AG04449 (cell line): ENCODE measurements at regions of chr5 and their contacts with region 1.

Region 1: DNA sequence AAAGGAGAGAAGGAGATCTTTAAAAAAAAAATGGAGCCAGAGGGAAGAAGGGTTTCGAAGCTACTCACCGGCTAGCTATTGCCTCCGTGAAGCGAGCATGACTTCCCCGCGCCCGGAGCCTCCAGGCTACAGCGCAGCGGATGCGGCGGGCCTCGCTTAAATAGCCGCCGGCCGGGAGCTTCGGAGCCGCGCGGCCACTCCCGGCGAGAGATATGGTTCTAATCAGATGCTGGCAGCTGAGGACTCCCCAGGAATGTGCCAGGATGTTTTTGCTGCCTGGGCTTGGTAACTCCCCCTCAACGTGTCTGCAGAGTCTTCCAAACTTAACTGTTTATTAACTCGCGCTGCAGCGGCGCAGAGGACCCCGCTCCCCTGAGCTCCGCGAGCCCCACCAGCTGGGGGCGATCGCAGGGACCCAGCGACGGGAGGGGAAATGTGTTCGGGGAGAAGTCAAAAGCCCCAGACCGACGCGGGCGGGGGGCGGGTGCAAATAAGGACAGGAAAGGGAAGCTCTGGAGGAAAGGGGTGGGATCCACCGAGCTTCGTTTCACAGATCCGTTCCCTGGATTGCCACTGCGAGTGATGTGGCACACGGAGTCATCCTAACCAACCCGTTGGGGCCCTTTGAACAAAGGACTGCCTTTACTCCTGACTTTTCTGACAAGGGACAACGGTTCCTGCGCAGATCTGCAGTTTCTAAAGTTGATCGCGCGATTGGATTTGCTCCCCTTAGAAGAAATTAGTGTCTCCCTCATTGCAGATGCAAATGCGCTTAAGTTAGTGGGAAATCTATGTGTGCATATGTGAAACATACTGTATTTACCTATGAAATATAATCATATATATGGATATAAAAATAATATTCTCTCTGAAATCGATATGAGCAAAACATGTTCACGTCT is at the start of gene DAB2:
- DNase-seq: peak; percentile 91
- H3K4me3 ChIP-seq: peak within 1 kb of the TSS; percentile 83
- CTCF ChIP-seq: peak; percentile 87

Region 2: GRCh38 chr5:38938424-38938823 is 486.6 kb before region 1 on chr5:
- CTCF ChIA-PET with region 1: no interaction called
- POLR2A ChIA-PET with region 1: no interaction called
- DNase-seq: no peak
- H3K4me3 ChIP-seq: no peak overlapping the region
- CTCF ChIP-seq: no peak

Region 3: GRCh38 chr5:39399135-39400036 is 25.6 kb before region 1 on chr5:
- CTCF ChIA-PET with region 1: interaction called, 9 read pairs
- POLR2A ChIA-PET with region 1: interaction called, 35 read pairs
- DNase-seq: peak; percentile 94
- H3K4me3 ChIP-seq: no peak overlapping the region
- CTCF ChIP-seq: no peak

Region 4: GRCh38 chr5:39411051-39411450 is 13.9 kb before region 1 on chr5:
- CTCF ChIA-PET with region 1: interaction called, 23 read pairs
- POLR2A ChIA-PET with region 1: interaction called, 32 read pairs
- DNase-seq: no peak
- H3K4me3 ChIP-seq: no peak overlapping the region
- CTCF ChIP-seq: no peak

Region 5: DNA sequence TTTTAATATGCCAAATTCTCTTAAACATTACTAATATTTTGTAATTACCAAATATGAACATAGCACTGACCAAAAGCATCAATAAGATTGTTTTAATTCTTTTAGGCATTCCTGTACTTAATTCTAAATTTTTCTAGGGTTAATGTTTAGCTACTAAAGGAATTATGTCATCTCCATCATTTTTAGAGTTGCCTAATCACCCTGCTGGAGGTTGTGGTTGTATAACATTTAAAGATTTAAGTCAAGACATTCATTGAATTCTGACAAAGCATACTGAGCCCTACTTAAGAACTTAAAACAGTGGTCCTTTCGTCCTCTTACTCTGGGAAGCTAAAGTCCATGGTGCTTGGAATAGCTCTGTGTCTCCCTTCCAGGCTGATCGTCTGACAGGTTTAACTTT is 27.9 kb after region 1 on chr5:
- CTCF ChIA-PET with region 1: interaction called, 14 read pairs
- POLR2A ChIA-PET with region 1: interaction called, 36 read pairs
- DNase-seq: peak; percentile 68
- H3K4me3 ChIP-seq: no peak overlapping the region
- CTCF ChIP-seq: no peak

Region 6: DNA sequence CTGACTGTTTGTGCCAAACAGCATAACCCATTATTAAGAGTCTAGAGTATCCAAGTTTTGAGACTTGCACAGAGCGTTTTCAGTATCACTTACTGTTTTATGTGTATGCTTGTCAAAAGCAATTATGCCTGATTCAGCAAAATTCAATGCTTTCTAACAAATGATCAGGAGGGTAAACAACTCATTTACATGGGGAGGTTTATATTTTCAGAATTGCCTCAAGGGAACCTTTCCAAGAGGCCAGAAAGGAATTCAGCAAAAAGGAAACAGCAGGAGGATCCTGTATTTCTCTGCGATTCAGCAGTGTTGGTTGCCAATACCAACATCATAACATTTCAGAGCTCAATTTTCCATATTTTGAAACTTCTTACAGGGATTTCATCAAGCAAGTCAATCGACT is 69.1 kb after region 1 on chr5:
- CTCF ChIA-PET with region 1: interaction called, 4 read pairs
- POLR2A ChIA-PET with region 1: interaction called, 12 read pairs
- DNase-seq: no peak
- H3K4me3 ChIP-seq: no peak overlapping the region
- CTCF ChIP-seq: no peak

Region 7: GRCh38 chr5:39520232-39520572 is 95.2 kb after region 1 on chr5:
- CTCF ChIA-PET with region 1: interaction called, 20 read pairs
- POLR2A ChIA-PET with region 1: interaction called, 53 read pairs
- DNase-seq: peak; percentile 83
- H3K4me3 ChIP-seq: no peak overlapping the region
- CTCF ChIP-seq: no peak

Region 8: GRCh38 chr5:39570403-39571027 is 145.5 kb after region 1 on chr5:
- CTCF ChIA-PET with region 1: interaction called, 58 read pairs
- POLR2A ChIA-PET with region 1: no interaction called
- DNase-seq: no peak
- H3K4me3 ChIP-seq: no peak overlapping the region
- CTCF ChIP-seq: peak; percentile 33